Psoas muscle (tissue), 8 donors: ENCODE measurements at regions of chr6 and their contacts with region 1.

Region 1: DNA sequence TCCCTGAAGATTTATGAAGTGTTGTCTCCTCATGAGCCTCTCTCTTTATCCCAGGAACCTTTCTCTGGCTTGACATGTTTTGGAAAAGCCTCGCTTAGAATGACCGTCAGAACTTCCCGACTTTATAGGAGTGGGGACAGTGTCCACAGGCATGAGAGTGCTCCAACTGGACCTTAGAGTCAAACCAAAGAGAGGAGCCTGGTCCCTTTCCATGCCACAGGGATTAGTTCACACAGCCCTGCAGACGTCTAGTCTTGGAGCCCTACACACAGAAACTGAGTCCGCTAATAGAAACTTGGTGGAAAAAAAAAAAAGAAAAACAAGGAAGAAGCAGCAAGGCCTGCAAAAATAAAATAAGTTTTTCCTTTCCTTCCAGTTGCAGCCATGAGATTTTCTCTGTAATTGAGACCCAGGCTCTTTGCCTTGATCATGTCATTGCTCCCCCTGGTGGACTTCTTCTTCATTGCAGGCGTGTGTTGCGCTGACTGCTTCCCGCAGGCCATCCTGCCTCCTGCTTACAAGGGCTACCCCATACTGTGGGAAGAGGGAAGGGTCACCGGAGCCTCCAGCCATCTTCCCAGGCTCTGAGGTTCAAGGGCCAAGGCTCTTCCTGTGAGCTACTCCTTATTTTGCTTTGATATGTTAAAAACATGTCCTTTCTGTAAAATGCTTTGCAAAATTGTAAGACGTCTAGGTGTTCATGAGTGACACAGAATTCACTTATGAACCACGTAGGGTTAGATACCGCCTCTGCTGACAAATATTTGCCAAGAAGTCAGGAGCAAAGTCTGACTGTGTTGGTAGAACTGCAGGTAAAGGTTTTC is 201.0 kb downstream of the UST start:
- DNase-seq: peak; percentile 77 to 83
- ATAC-seq: peak; percentile 88 to 96 (median 90)
- H3K4me3 ChIP-seq: no peak overlapping the region
- H3K27ac ChIP-seq: no peak overlapping the region
- H3K4me1 ChIP-seq: peaks cover 5% of the 10 kb centered on the region
- H3K27me3 ChIP-seq: no peaks in the 10 kb centered on the region
- CTCF ChIP-seq: peak; percentile 93

Region 2: GRCh38 chr6:148559848-148560433 is 387.9 kb before region 1 on chr6:
- intact Hi-C with region 1: loop called in 1 of 2 experiments (anchors 2 kb)
- DNase-seq: peak; percentile 76 to 87
- ATAC-seq: peak; percentile 89 to 98 (median 93)
- H3K4me3 ChIP-seq: peak overlapping the region; percentile 61
- H3K27ac ChIP-seq: no peak overlapping the region
- H3K4me1 ChIP-seq: no peaks in the 10 kb centered on the region
- H3K27me3 ChIP-seq: no peaks in the 10 kb centered on the region
- CTCF ChIP-seq: peak; percentile 98

Region 3: GRCh38 chr6:148578245-148578732 is 369.5 kb before region 1 on chr6:
- intact Hi-C with region 1: loop called (anchors 1 to 2 kb)
- DNase-seq: peak; percentile 78 to 90
- ATAC-seq: peak; percentile 97 to 100 (median 100)
- H3K4me3 ChIP-seq: no peak overlapping the region
- H3K27ac ChIP-seq: no peak overlapping the region
- H3K4me1 ChIP-seq: no peaks in the 10 kb centered on the region
- H3K27me3 ChIP-seq: no peaks in the 10 kb centered on the region
- CTCF ChIP-seq: peak; percentile 89

Region 4: DNA sequence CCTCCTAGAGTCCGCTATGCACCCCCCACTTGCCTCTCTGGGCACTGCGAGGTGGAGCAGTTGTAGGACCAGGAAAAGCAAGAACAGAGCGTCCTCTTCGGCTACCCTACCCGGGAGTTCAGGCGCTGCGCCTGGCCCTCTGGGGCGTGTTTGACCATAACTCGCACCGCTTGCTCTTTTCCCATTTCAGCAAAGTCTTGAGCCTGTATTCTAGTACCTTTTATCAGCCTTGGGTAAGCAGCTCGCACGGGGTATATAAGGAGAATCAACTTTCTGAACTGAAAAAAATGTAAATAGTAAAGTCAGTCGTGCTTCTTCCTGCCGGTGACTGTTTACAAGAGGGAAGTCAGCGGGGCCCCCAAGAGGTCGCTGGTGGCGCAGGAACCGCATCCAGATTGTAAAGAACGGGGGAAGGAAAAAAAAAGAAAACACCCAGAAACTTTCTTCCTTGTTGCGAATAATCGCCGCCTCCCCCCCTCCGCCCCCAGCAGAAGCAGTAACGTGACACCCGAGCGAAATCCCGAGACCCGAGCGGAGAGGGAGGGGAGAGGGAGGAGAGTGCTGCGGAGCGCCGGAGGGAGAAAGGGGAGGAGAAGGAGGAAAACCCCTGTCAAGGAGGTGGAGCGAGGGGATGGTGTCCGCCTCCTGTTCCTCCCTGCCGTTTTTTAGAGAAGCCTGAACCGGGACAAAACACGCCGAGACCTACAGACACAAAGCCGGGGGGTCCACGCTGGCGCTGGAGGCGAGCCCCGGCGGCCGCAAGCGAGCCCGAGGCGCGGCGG is 201.3 kb before region 1 on chr6 and contains the start of gene UST:
- intact Hi-C with region 1: loop called (anchors 2 to 5 kb)
- DNase-seq: peak; percentile 87 to 90
- ATAC-seq: peak; percentile 71 to 83 (median 76)
- H3K4me3 ChIP-seq: peak within 1 kb of the TSS; percentile 78
- H3K27ac ChIP-seq: peak within 1 kb of the TSS; percentile 57
- H3K4me1 ChIP-seq: no peaks in the 10 kb centered on the region
- H3K27me3 ChIP-seq: peaks cover 0 to 22% (median 4%) of the 10 kb centered on the region in 3 donors
- CTCF ChIP-seq: peak; percentile 8
- total RNA-seq, gene UST: 1.2 to 2.3 (median 2.0) TPM